HCT116 (cell line): ENCODE measurements at regions of chr7 and their contacts with region 1.

Region 1: DNA sequence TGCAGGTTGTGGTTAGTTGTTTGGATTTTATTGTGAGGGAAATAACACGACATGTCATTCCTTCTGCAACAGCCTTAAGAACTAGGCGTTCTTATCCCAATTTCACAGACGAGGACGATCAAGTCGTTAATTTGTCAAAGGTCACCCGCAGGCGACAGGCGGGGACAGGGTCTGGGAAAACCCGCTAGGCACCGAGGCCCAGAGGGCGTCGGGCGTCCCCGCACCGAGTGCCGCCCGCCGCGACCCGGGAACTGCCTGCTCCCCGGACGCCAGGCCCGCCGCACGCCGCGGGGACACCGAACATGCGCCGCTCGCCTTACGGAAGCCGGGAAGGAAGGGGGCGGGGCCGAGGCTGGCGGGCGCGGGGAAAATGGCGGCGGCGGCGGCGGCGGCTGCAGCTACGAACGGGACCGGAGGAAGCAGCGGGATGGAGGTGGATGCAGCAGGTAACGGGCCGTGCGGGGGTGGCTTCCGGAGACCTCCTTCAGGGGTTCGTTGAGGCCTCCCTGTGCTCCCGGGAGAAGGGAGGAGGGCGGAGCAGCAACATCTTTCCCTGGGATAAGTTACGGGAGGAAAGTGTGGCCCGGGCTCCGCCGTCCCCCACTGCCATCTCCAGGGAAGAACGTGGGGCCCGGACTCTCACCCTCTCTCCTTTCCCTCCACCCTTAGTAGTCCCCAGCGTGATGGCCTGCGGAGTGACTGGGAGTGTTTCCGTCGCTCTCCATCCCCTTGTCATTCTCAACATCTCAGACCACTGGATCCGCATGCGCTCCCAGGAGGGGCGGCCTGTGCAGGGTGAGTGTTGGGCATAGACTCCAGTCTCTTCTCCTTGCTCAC is at the start of gene COPS6:
- DNase-seq: no peak
- ATAC-seq: peak; percentile 45
- H3K4me3 ChIP-seq: peak within 1 kb of the TSS; percentile 91 to 93
- H3K27ac ChIP-seq: peak within 1 kb of the TSS; percentile 90
- H3K4me1 ChIP-seq: peaks cover 8 to 38% of the 10 kb centered on the region in 2 experiments
- H3K27me3 ChIP-seq: no peaks in the 10 kb centered on the region
- CTCF ChIP-seq: no peak
- POLR2A ChIP-seq: peak; percentile 88
- RAD21 ChIP-seq: no peak
- total RNA-seq, gene COPS6: 126 TPM

Region 2: GRCh38 chr7:100157334-100158228 is 68.7 kb after region 1 on chr7:
- CTCF ChIA-PET with region 1: no interaction called
- POLR2A ChIA-PET with region 1: no interaction called
- RAD21 ChIA-PET with region 1: interaction called in 1 of 2 experiments, 11 read pairs
- intact Hi-C with region 1: no loop called
- DNase-seq: no peak
- ATAC-seq: peak; percentile 59
- H3K4me3 ChIP-seq: peak overlapping the region; percentile 56 to 91
- H3K27ac ChIP-seq: peak overlapping the region; percentile 91
- H3K4me1 ChIP-seq: peaks cover 15 to 23% of the 10 kb centered on the region in 2 experiments
- H3K27me3 ChIP-seq: no peaks in the 10 kb centered on the region
- CTCF ChIP-seq: peak in 2 of 3 experiments; percentile 17 to 27; a peak in 3 of 6 replicates
- POLR2A ChIP-seq: no peak
- RAD21 ChIP-seq: no peak

Region 3: GRCh38 chr7:100662377-100662776 is 573.5 kb after region 1 on chr7:
- CTCF ChIA-PET with region 1: no interaction called
- POLR2A ChIA-PET with region 1: no interaction called
- RAD21 ChIA-PET with region 1: no interaction called
- intact Hi-C with region 1: no loop called
- DNase-seq: no peak
- ATAC-seq: peak; percentile 73
- H3K4me3 ChIP-seq: peak overlapping the region in 1 of 2 experiments; percentile 22; a peak in 1 of 4 replicates
- H3K27ac ChIP-seq: no peak overlapping the region; the same call in 1 of the 2 replicates
- H3K4me1 ChIP-seq: peaks cover 10 to 17% of the 10 kb centered on the region in 2 experiments; a peak in 3 of 4 replicates
- H3K27me3 ChIP-seq: no peaks in the 10 kb centered on the region
- CTCF ChIP-seq: no peak
- POLR2A ChIP-seq: no peak
- RAD21 ChIP-seq: no peak